IMR-90 (cell line): ENCODE measurements at regions of chr11 and their contacts with region 1.

Region 1: GRCh38 chr11:3160252-3161031 is 4.7 kb downstream of the OSBPL5 start:
- DNase-seq: peak; percentile 92
- ATAC-seq: peak; percentile 81
- H3K4me3 ChIP-seq: peak overlapping the region; percentile 53
- H3K27ac ChIP-seq: peak overlapping the region; percentile 70
- H3K4me1 ChIP-seq: peaks cover 52% of the 10 kb centered on the region
- H3K27me3 ChIP-seq: no peaks in the 10 kb centered on the region
- CTCF ChIP-seq: no peak
- POLR2A ChIP-seq: no peak
- RAD21 ChIP-seq: no peak; the same call in 1 of the 2 replicates

Region 2: DNA sequence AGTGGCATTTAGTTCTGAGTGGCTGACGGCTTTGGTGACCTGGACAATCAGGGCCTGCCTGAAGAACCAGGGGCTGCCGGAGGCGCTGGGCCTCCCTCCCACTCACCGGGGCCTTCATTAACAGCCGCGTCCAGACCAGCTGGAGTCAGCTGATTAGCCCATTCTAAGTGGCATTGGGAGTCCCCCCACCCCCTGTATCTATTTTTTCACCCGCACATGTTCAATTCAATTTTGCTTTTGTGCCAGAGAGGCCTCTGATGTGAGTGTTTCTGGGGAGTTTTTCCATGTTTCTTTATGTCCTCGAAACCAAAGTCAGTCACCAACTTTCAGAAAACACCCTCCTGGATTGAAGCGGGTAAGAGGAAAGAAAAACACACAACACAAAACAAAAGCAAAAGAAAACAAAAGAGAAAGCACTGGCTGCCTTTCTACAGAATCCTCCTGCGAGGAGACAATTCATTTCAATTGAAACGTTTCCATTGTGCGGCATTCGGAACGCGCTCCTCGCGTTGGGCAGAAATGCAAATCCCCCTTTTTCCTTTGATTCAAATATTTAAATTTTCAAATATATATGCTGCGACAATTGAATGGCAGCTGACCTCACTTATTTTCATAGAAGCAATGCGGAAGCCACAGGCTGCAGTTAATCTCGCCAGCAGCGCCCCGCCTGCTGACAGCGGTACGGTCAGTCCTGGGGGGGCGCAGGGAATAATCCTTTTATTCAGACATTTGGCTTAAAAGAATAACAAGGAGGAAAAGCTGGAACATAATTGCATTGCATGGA is 292.5 kb before region 1 on chr11:
- CTCF ChIA-PET with region 1: no interaction called
- POLR2A ChIA-PET with region 1: no interaction called
- dilution Hi-C with region 1: no loop called
- in situ Hi-C with region 1: no loop called
- intact Hi-C with region 1: no loop called
- DNase-seq: no peak
- ATAC-seq: no peak
- H3K4me3 ChIP-seq: no peak overlapping the region
- H3K27ac ChIP-seq: no peak overlapping the region
- H3K4me1 ChIP-seq: peaks cover 2% of the 10 kb centered on the region; the same call in 1 of the 2 replicates
- H3K27me3 ChIP-seq: peaks cover 74% of the 10 kb centered on the region
- CTCF ChIP-seq: no peak
- POLR2A ChIP-seq: no peak
- RAD21 ChIP-seq: no peak

Region 3: DNA sequence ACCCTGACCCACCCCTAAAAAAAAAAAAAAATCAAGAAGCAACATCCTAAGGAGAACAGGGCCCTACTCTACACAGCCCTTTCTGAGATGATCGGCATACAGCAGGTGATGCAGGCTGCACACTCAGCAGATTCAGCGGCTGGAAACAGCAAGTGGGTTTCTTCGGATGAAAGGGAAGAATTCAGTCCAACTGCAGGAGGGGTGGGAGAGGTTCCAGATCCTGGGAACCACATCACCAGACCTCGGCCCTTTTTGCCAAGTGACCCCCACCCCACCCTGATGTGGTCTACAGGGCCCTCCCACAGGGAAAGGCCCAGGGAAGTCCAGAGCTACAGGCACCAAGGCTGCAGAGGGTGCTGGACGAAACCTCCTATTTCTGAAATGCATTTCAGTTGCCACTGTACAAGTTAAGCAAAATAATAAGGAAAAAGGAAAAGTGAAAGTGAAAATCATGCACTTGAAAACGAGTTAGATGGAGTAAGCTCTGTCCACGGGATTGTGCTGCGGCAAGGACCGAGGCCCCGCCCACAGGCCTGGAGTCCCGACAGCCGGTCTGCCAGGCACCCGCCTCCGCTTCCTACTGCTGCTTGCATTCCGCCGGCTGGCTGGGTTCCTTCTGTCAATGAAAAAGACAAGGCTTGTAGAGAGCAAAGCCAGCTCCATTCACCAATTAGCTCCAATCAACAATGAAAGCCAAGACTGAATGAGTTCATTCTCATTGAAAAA is 215.2 kb before region 1 on chr11:
- CTCF ChIA-PET with region 1: no interaction called
- POLR2A ChIA-PET with region 1: no interaction called
- dilution Hi-C with region 1: no loop called
- in situ Hi-C with region 1: no loop called
- intact Hi-C with region 1: no loop called
- DNase-seq: peak; percentile 90
- ATAC-seq: peak; percentile 96
- H3K4me3 ChIP-seq: peak overlapping the region; percentile 8; the same call in 1 of the 2 replicates
- H3K27ac ChIP-seq: peak overlapping the region; percentile 83
- H3K4me1 ChIP-seq: peaks cover 7% of the 10 kb centered on the region; the same call in 1 of the 2 replicates
- H3K27me3 ChIP-seq: no peaks in the 10 kb centered on the region
- CTCF ChIP-seq: no peak
- POLR2A ChIP-seq: no peak
- RAD21 ChIP-seq: no peak

Region 4: GRCh38 chr11:3057069-3057963 is 103.1 kb before region 1 on chr11 and contains the start of gene CARS1:
- CTCF ChIA-PET with region 1: no interaction called
- POLR2A ChIA-PET with region 1: no interaction called
- dilution Hi-C with region 1: no loop called
- in situ Hi-C with region 1: no loop called
- intact Hi-C with region 1: loop called (anchors 10 kb)
- DNase-seq: peak; percentile 93
- ATAC-seq: peak; percentile 90
- H3K4me3 ChIP-seq: peak within 1 kb of the TSS; percentile 87
- H3K27ac ChIP-seq: peak within 1 kb of the TSS; percentile 97
- H3K4me1 ChIP-seq: peaks cover 11% of the 10 kb centered on the region
- H3K27me3 ChIP-seq: no peaks in the 10 kb centered on the region
- CTCF ChIP-seq: no peak
- POLR2A ChIP-seq: peak; percentile 96
- RAD21 ChIP-seq: 0 out of 2 replicates have a peak, but pooled peaks have one; percentile 15
- total RNA-seq, gene CARS1: 65.8 and 78.3 TPM in 2 replicates

Region 5: GRCh38 chr11:3123761-3124733 is 36.4 kb before region 1 on chr11:
- CTCF ChIA-PET with region 1: no interaction called
- POLR2A ChIA-PET with region 1: no interaction called
- dilution Hi-C with region 1: no loop called
- in situ Hi-C with region 1: no loop called
- intact Hi-C with region 1: loop called (anchors 5 kb)
- DNase-seq: peak; percentile 97
- ATAC-seq: peak; percentile 97
- H3K4me3 ChIP-seq: no peak overlapping the region
- H3K27ac ChIP-seq: no peak overlapping the region
- H3K4me1 ChIP-seq: peaks cover 6% of the 10 kb centered on the region
- H3K27me3 ChIP-seq: no peaks in the 10 kb centered on the region
- CTCF ChIP-seq: no peak; the same call in 1 of the 2 replicates
- POLR2A ChIP-seq: no peak
- RAD21 ChIP-seq: peak; percentile 20; the same call in 1 of the 2 replicates